Natural killer cell (primary cell): ENCODE measurements at regions of chr4 and their contacts with region 1.

Region 1: GRCh38 chr4:119300101-119300978 is 21.6 kb downstream of the FABP2 start:
- DNase-seq: peak; percentile 89 to 95
- ATAC-seq: peak; percentile 94 to 97 (median 96)
- H3K4me3 ChIP-seq: peak overlapping the region; percentile 94
- H3K4me3 Mint-ChIP-seq: peak overlapping the region; percentile 100
- H3K27ac ChIP-seq: peak overlapping the region; percentile 97
- H3K27ac Mint-ChIP-seq: peak overlapping the region; percentile 100
- H3K4me1 ChIP-seq: peaks cover 15% of the 10 kb centered on the region
- H3K4me1 Mint-ChIP-seq: peaks cover 30 to 38% of the 10 kb centered on the region in 2 donors
- H3K27me3 ChIP-seq: no peaks in the 10 kb centered on the region
- H3K27me3 Mint-ChIP-seq: peaks cover 4 to 6% of the 10 kb centered on the region in 2 donors
- CTCF ChIP-seq: no peak

Region 2: DNA sequence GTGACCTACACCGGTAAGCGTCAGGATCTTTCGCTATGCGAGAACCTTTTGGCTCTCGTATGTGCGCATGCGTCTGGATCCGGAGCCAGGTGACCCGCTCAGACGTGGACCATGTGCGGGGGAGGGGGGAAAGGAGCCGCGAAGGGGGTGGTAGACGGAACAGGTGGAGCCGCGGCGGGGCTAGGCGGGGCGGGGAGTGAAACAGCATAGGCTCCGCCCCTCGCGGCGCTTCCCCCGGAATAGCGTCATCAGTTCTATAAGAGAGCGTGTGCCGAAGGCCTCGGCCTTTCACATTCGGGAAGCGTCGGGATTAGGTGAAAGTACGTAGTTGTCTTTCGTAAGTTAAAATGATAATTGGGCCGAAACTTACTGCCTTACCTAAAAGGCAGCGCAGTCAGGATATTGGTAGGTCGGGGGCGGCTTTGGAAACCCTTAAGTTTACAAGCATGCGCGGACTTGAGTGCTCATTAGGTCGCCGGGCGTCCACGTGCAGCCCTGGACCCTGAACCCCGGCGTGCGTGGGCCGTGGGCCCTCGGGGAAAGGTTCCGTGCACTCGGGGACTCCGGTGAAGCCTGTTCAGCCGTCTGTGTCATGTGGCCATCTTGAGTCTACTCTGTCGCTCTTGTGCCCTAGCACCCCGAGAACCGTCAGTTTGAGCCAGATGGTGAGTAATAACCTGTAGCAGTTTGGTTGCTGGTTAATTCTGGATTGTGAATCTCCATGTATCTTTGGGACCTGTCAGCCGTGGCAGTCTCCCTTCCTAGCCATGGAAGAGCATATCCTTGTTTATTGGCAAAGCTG is 1021.7 kb before region 1 on chr4:
- intact Hi-C with region 1: loop called (anchors 10 kb)
- DNase-seq: peak; percentile 89 to 99
- ATAC-seq: peak; percentile 92 to 99 (median 95)
- H3K4me3 ChIP-seq: peak overlapping the region; percentile 84
- H3K4me3 Mint-ChIP-seq: peak overlapping the region; percentile 95
- H3K27ac ChIP-seq: peak overlapping the region; percentile 92
- H3K27ac Mint-ChIP-seq: peak overlapping the region; percentile 97 to 99
- H3K4me1 ChIP-seq: peaks cover 17% of the 10 kb centered on the region
- H3K4me1 Mint-ChIP-seq: peaks cover 37 to 41% of the 10 kb centered on the region in 2 donors
- H3K27me3 ChIP-seq: no peaks in the 10 kb centered on the region
- H3K27me3 Mint-ChIP-seq: no peaks in the 10 kb centered on the region
- CTCF ChIP-seq: no peak

Region 3: GRCh38 chr4:119172223-119172622 is 128.1 kb before region 1 on chr4:
- intact Hi-C with region 1: no loop called
- DNase-seq: no peak
- ATAC-seq: no peak
- H3K4me3 ChIP-seq: no peak overlapping the region
- H3K4me3 Mint-ChIP-seq: no peak overlapping the region
- H3K27ac ChIP-seq: no peak overlapping the region
- H3K27ac Mint-ChIP-seq: no peak overlapping the region
- H3K4me1 ChIP-seq: no peaks in the 10 kb centered on the region
- H3K4me1 Mint-ChIP-seq: no peaks in the 10 kb centered on the region
- H3K27me3 ChIP-seq: peaks cover 3% of the 10 kb centered on the region
- H3K27me3 Mint-ChIP-seq: peaks cover 2 to 5% of the 10 kb centered on the region in 2 donors
- CTCF ChIP-seq: no peak

Region 4: GRCh38 chr4:119212234-119212963 is 87.9 kb before region 1 on chr4 and contains the start of gene USP53:
- intact Hi-C with region 1: loop called (anchors 1 kb)
- DNase-seq: peak; percentile 92 to 99
- ATAC-seq: peak; percentile 94 to 99 (median 95)
- H3K4me3 ChIP-seq: peak within 1 kb of the TSS; percentile 64
- H3K4me3 Mint-ChIP-seq: peak within 1 kb of the TSS; percentile 98
- H3K27ac ChIP-seq: peak within 1 kb of the TSS; percentile 84
- H3K27ac Mint-ChIP-seq: peak within 1 kb of the TSS; percentile 81 to 93
- H3K4me1 ChIP-seq: peaks cover 7% of the 10 kb centered on the region
- H3K4me1 Mint-ChIP-seq: peaks cover 23 to 28% of the 10 kb centered on the region in 2 donors
- H3K27me3 ChIP-seq: no peaks in the 10 kb centered on the region
- H3K27me3 Mint-ChIP-seq: peaks cover 3 to 7% of the 10 kb centered on the region in 2 donors
- CTCF ChIP-seq: no peak
- total RNA-seq, gene USP53: 8.9 to 10.5 (median 9.3) TPM